ENCODE measurements at regions of chr5 and their contacts with region 1.

Region 1: GRCh38 chr5:177327539-177328522 is 16.1 kb upstream of the MXD3 start:
- DNase-seq: no peak
- H3K4me3 ChIP-seq: no peak overlapping the region
- CTCF ChIP-seq: no peak

Region 2: GRCh38 chr5:175796536-175797499 is 1531.0 kb before region 1 on chr5:
- CTCF ChIA-PET with region 1: no interaction called
- POLR2A ChIA-PET with region 1: no interaction called
- DNase-seq: no peak
- H3K4me3 ChIP-seq: peak overlapping the region; percentile 15; the same call in 1 of the 2 replicates
- CTCF ChIP-seq: no peak

Region 3: GRCh38 chr5:177311723-177312648 is 15.8 kb before region 1 on chr5 and contains the start of gene MXD3:
- CTCF ChIA-PET with region 1: interaction called, 53 read pairs
- POLR2A ChIA-PET with region 1: no interaction called
- DNase-seq: no peak
- H3K4me3 ChIP-seq: peak within 1 kb of the TSS; percentile 68
- CTCF ChIP-seq: no peak

Region 4: DNA sequence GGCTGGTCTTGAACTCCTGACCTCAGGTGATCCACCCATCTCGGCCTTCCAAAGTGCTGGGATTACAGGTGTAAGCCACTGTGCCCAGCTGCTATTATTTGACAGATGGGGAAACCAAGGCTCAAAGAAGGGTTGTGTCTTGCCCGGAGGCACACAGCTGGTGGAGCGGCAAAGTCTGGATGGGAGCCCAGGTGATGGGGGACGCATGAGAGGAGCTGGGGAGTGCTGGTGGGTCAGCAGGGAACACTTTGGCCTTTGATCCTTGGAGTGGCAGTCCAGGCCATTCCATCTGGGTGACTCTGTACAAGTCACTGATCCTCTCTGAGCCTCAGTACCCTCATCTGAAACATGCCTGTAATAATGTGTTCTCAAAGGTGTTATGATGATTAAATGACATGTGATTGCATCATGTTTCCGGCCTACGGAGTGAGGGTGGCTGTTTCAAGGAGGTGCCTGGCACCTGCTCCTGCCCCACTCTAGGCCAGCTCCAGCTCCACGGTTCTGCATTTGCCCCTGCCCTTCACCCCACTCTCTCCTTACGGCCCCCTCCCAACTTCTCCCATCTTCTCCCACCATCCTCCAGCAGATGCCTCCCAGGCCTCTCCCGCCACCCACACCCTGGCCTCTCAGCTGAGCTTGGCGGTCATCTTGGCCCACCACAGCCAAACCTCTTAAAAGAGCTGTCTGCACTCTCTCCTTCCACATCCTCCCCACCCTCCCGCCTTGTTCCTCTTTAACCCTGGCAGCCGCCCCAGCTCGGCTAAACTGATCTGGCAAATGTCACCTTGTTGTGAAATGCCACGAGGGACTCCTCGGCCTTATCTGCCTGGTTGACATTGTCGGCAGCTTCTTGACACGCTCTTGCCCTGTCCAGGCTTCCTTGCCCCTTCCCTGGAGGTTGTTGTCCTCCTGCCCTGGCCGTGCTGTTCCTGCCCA is 151.1 kb after region 1 on chr5:
- CTCF ChIA-PET with region 1: no interaction called
- POLR2A ChIA-PET with region 1: no interaction called
- DNase-seq: no peak
- H3K4me3 ChIP-seq: no peak overlapping the region
- CTCF ChIP-seq: no peak